ENCODE measurements at regions of chr15 and their contacts with region 1.

Region 1: GRCh38 chr15:48877630-48878595 is at the start of gene EID1:
- DNase-seq: peak; percentile 95
- ATAC-seq: peak; percentile 96
- H3K4me3 Mint-ChIP-seq: peak within 1 kb of the TSS; percentile 99
- H3K27ac Mint-ChIP-seq: peak within 1 kb of the TSS; percentile 100
- H3K4me1 Mint-ChIP-seq: peaks cover 25% of the 10 kb centered on the region
- H3K27me3 Mint-ChIP-seq: peaks cover 8% of the 10 kb centered on the region
- total RNA-seq, gene EID1: 85.3 to 89.5 TPM

Region 2: DNA sequence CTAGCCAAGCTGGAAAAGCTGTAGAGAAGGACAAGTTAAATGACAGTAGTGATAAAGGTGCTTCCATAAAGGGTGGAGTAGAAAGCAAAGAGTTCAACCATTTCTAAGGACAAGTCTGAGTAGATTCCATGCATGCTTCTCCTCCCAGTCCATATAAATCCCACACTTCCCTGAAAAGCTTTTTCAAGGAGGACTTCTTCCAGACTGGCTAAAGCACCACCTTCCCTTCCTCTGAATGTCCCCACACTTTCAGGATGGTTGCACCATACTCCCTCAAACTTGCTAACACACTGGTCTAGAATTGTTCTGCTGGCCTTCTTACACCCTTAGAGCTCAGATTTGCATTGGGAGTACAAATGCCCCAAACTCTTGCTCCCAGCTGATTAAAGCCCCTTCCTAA is 273.3 kb before region 1 on chr15:
- CTCF ChIA-PET with region 1: no interaction called
- POLR2A ChIA-PET with region 1: no interaction called
- DNase-seq: no peak
- ATAC-seq: no peak
- H3K4me3 Mint-ChIP-seq: no peak overlapping the region
- H3K27ac Mint-ChIP-seq: no peak overlapping the region
- H3K4me1 Mint-ChIP-seq: no peaks in the 10 kb centered on the region
- H3K27me3 Mint-ChIP-seq: peaks cover 6% of the 10 kb centered on the region

Region 3: GRCh38 chr15:48810414-48811317 is 67.2 kb before region 1 on chr15 and contains the start of gene CEP152:
- CTCF ChIA-PET with region 1: interaction called, 3 read pairs
- POLR2A ChIA-PET with region 1: interaction called, 16 read pairs
- DNase-seq: peak; percentile 100
- ATAC-seq: peak; percentile 97
- H3K4me3 Mint-ChIP-seq: peak within 1 kb of the TSS; percentile 95
- H3K27ac Mint-ChIP-seq: peak within 1 kb of the TSS; percentile 96
- H3K4me1 Mint-ChIP-seq: peaks cover 35% of the 10 kb centered on the region
- H3K27me3 Mint-ChIP-seq: peaks cover 17% of the 10 kb centered on the region
- total RNA-seq, gene CEP152: 39.6 to 40.0 TPM

Region 4: DNA sequence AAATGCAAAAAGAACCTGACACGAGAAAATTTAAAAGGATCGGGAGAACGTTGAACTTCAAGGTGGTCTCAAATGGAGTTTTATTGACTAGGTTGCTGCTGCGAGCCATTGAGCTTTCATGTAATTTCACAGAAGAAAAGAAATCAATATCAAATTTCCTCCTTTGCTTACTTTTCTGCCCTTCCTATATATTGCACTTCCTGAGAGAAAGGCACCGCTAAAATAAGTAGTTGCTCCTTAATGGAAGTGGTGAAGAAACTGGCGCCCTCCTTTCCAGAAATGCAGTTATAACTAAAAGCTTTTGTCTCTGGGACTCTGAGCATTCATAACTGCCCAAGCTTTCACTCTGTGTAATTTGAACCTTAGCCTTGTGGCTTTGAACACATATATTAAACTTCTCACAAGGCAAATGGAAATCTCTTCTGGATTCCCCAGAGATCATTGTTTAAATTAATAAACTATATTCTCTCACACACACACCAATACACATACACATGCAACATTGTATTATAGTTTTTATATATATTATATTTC is 13.4 kb after region 1 on chr15:
- CTCF ChIA-PET with region 1: interaction called, 5 read pairs
- POLR2A ChIA-PET with region 1: interaction called, 11 read pairs
- DNase-seq: no peak
- ATAC-seq: no peak
- H3K4me3 Mint-ChIP-seq: no peak overlapping the region
- H3K27ac Mint-ChIP-seq: no peak overlapping the region
- H3K4me1 Mint-ChIP-seq: no peaks in the 10 kb centered on the region
- H3K27me3 Mint-ChIP-seq: peaks cover 7% of the 10 kb centered on the region

Region 5: GRCh38 chr15:48963524-48964113 is 85.7 kb after region 1 on chr15 and contains the start of gene SHC4:
- CTCF ChIA-PET with region 1: interaction called, 42 read pairs
- POLR2A ChIA-PET with region 1: interaction called, 33 read pairs
- DNase-seq: peak; percentile 41
- ATAC-seq: peak; percentile 56
- H3K4me3 Mint-ChIP-seq: peak within 1 kb of the TSS; percentile 69
- H3K27ac Mint-ChIP-seq: peak within 1 kb of the TSS; percentile 72
- H3K4me1 Mint-ChIP-seq: peaks cover 56% of the 10 kb centered on the region
- H3K27me3 Mint-ChIP-seq: peaks cover 22% of the 10 kb centered on the region
- total RNA-seq, gene SHC4: 0.65 to 0.66 TPM

Region 6: GRCh38 chr15:49015896-49016295 is 138.0 kb after region 1 on chr15:
- CTCF ChIA-PET with region 1: no interaction called
- POLR2A ChIA-PET with region 1: no interaction called
- DNase-seq: no peak
- ATAC-seq: no peak
- H3K4me3 Mint-ChIP-seq: no peak overlapping the region
- H3K27ac Mint-ChIP-seq: no peak overlapping the region
- H3K4me1 Mint-ChIP-seq: no peaks in the 10 kb centered on the region
- H3K27me3 Mint-ChIP-seq: no peaks in the 10 kb centered on the region

Region 7: GRCh38 chr15:49046220-49047102 is 168.5 kb after region 1 on chr15 and contains the start of gene SECISBP2L:
- CTCF ChIA-PET with region 1: interaction called, 6 read pairs
- POLR2A ChIA-PET with region 1: interaction called, 17 read pairs
- DNase-seq: peak; percentile 94
- ATAC-seq: peak; percentile 95
- H3K4me3 Mint-ChIP-seq: peak within 1 kb of the TSS; percentile 94
- H3K27ac Mint-ChIP-seq: peak within 1 kb of the TSS; percentile 86
- H3K4me1 Mint-ChIP-seq: peaks cover 22% of the 10 kb centered on the region
- H3K27me3 Mint-ChIP-seq: no peaks in the 10 kb centered on the region
- total RNA-seq, gene SECISBP2L: 28.3 to 29.2 TPM

Region 8: GRCh38 chr15:49155110-49155833 is 277.4 kb after region 1 on chr15 and contains the start of gene COPS2:
- CTCF ChIA-PET with region 1: interaction called, 7 read pairs
- POLR2A ChIA-PET with region 1: interaction called, 20 read pairs
- DNase-seq: peak; percentile 97
- ATAC-seq: peak; percentile 94
- H3K4me3 Mint-ChIP-seq: peak within 1 kb of the TSS; percentile 99
- H3K27ac Mint-ChIP-seq: peak within 1 kb of the TSS; percentile 99
- H3K4me1 Mint-ChIP-seq: peaks cover 43% of the 10 kb centered on the region
- H3K27me3 Mint-ChIP-seq: no peaks in the 10 kb centered on the region
- total RNA-seq, gene COPS2: 55.8 to 56.8 TPM

Measured in activated CD8-positive, alpha-beta T cell treated with anti-CD3 and anti-CD28 coated beads, Interleukin-2, amount 10 ng/mL, durations not matched to agents 7 days and 5 days (primary cell).